A549 (cell line): ENCODE measurements at regions of chr17 and their contacts with region 1.

Region 1: GRCh38 chr17:76506408-76507349 is 5.5 kb upstream of the RHBDF2 start:
- DNase-seq: peak; percentile 71 to 95
- ATAC-seq: peak; percentile 80 to 90
- H3K4me3 ChIP-seq: no peak overlapping the region
- H3K27ac ChIP-seq: peak overlapping the region; percentile 52 to 73; a peak in 5 of 6 replicates
- H3K4me1 ChIP-seq: peaks cover 9% of the 10 kb centered on the region
- CTCF ChIP-seq: peak; percentile 98
- EP300 ChIP-seq: no peak
- POLR2A ChIP-seq: no peak
- RAD21 ChIP-seq: peak; percentile 99

Region 2: DNA sequence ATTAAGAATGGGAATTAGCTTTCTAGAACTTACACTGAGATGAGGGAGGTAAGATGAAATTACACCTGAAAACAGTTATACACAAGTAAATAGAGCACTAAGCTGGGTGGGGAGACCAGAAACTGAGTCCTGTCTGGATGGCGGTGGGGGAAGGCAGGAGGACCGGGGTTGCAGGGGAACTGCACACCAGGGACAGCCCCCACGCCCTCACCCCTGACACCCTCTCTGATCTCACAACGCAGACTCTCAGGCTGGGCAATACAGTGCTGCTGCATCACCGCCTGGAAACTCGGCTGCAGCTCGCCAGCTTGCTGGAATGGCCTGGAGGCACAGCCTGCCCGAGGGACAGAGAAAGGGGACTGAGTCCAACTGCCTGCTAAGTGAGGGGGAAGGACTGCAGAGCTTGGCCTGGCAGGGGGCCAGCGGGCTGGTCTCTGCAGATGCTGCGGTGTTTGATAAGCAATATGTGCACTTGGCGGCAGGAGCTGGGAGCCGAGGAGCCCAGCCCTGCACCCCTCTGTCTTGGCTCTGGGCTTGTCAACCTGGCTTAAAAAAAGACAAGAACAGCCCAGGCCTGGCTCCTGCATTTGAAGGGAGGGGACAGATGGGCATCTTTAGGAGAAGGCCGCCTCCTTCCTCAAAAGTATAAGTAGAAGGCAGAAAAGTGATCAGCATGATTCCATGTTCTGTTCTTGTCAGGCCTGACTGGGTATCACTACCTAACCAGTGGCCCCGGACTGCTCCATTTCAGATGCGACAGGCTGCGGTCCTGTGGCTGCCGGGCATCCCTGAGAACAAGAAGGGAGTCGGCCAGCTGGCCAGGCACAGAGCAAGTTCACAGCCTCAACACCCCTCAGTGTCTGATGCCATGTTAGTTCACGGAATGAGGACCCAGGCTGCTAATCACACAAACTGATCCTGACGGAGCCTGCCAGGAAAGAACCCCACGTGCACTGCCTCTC is 92.1 kb before region 1 on chr17:
- CTCF ChIA-PET with region 1: interaction called, 51 read pairs
- POLR2A ChIA-PET with region 1: no interaction called
- DNase-seq: no peak
- ATAC-seq: no peak; a peak in 1 of 6 replicates
- H3K4me3 ChIP-seq: no peak overlapping the region
- H3K27ac ChIP-seq: no peak overlapping the region
- H3K4me1 ChIP-seq: no peaks in the 10 kb centered on the region
- CTCF ChIP-seq: no peak
- EP300 ChIP-seq: no peak
- POLR2A ChIP-seq: no peak
- RAD21 ChIP-seq: no peak

Region 3: DNA sequence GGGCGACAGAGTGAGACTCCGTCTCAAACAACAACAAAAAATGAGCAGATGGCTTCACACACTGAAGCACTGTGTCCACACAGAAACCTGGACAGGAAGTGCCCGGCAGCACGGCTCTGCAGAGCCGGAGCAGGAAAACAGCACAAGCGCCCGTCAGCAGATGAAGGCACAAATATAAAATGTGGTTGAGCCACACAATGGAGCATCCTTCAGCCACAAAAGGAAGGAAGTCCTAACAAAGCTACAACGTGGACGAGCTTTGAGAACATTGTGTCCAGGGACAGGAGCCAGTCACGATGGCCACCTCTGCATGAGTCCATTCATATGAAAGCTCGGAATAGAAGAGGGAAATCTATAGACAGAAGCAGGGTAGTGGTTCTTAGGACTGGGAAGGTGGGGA is 21.1 kb before region 1 on chr17:
- CTCF ChIA-PET with region 1: interaction called, 1,994 read pairs
- POLR2A ChIA-PET with region 1: interaction called, 7 read pairs
- DNase-seq: no peak
- ATAC-seq: peak; percentile 8 to 20; a peak in 2 of 6 replicates
- H3K4me3 ChIP-seq: no peak overlapping the region
- H3K27ac ChIP-seq: peak overlapping the region in 1 of 2 experiments; percentile 74; a peak in 4 of 6 replicates
- H3K4me1 ChIP-seq: peaks cover 27% of the 10 kb centered on the region
- CTCF ChIP-seq: no peak
- EP300 ChIP-seq: no peak
- POLR2A ChIP-seq: no peak
- RAD21 ChIP-seq: no peak

Region 4: DNA sequence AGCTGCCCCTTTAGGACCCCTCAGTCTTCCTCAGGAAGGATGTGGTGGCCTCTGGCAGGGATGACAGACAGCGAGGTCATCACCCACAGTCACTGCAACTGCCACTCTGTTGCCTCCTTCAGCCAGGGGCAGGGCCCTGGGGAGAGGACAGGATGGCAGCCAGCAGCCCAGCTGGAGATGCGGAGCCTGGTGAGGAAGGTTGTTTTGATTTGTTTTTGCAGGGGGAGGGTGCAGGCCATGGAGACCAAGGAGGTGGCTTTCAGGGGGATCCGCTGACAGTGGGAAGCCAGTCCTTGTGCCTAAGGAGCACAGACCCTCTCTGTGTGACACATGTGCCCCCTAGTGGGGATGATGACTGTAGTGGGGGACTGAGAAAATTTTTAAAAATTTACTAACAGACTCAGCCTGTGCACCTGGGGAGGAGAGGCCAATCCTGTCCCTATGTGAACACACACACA is 40.5 kb after region 1 on chr17:
- CTCF ChIA-PET with region 1: interaction called, 33 read pairs
- POLR2A ChIA-PET with region 1: no interaction called
- DNase-seq: peak; percentile 72 to 74
- ATAC-seq: peak; percentile 66 to 89
- H3K4me3 ChIP-seq: no peak overlapping the region
- H3K27ac ChIP-seq: peak overlapping the region in 1 of 2 experiments; percentile 49; a peak in 4 of 6 replicates
- H3K4me1 ChIP-seq: peaks cover 36% of the 10 kb centered on the region
- CTCF ChIP-seq: peak; percentile 80
- EP300 ChIP-seq: no peak
- POLR2A ChIP-seq: no peak
- RAD21 ChIP-seq: peak; percentile 86 to 95

Region 5: GRCh38 chr17:76612977-76613851 is 106.5 kb after region 1 on chr17:
- CTCF ChIA-PET with region 1: no interaction called
- POLR2A ChIA-PET with region 1: no interaction called
- DNase-seq: peak in 1 of 2 experiments; percentile 58
- ATAC-seq: peak; percentile 58 to 79; a peak in 5 of 6 replicates
- H3K4me3 ChIP-seq: no peak overlapping the region
- H3K27ac ChIP-seq: no peak overlapping the region
- H3K4me1 ChIP-seq: peaks cover 10% of the 10 kb centered on the region
- CTCF ChIP-seq: no peak
- EP300 ChIP-seq: no peak
- POLR2A ChIP-seq: no peak
- RAD21 ChIP-seq: 0 out of 5 replicates have a peak, but pooled peaks of 1 of the 2 experiments have one; percentile 14